ENCODE measurements at regions of chr20 and their contacts with region 1.

Region 1: DNA sequence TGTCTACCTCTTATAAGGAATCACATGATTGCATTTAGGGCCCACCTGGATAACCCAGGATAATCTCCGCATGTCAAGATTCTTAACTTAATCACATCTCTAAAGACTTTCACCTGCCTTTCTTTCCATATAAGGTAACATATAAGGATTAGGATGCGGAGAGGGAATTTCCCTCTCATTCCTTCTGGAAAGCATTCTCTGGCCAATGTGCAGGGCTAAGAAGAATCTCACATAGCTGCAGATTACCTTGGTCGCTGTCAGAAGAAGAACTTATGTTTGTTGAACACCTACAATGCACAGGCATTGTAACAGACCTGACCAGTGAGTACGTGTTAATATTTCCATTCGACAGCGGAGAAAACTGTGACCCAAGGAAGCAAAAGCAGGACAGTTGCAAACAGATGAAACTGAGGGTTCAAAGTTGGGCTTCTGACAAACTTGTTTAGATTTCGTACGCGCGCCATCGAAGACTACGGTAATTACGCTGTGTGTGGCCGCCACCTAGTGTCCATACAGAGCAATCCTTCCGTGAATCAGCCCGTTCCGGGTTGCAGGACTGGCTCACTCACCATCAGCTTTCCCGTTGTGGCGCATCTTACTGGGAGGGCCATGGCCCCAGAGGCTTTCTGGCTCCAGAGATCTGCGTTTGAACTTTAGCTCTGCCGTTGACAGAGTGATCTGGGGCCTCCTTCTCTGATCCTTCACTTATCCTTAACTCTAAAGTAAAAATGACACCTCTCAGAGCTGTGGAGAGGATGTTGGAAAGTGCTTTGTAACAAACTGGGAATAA is 9.5 kb downstream of the C20orf202 start:
- DNase-seq: peak; percentile 55 to 75 (median 65)
- ATAC-seq: peak in 3 of 4 donors; percentile 88 to 92 (median 91)
- H3K4me3 ChIP-seq: no peak overlapping the region
- H3K27ac ChIP-seq: no peak overlapping the region
- H3K4me1 ChIP-seq: peaks cover 0 to 7% (median 0%) of the 10 kb centered on the region in 12 donors
- H3K27me3 ChIP-seq: peaks cover 0 to 12% (median 0%) of the 10 kb centered on the region in 9 donors
- CTCF ChIP-seq: peak; percentile 67 to 87 (median 80)
- POLR2A ChIP-seq: no peak

Region 2: DNA sequence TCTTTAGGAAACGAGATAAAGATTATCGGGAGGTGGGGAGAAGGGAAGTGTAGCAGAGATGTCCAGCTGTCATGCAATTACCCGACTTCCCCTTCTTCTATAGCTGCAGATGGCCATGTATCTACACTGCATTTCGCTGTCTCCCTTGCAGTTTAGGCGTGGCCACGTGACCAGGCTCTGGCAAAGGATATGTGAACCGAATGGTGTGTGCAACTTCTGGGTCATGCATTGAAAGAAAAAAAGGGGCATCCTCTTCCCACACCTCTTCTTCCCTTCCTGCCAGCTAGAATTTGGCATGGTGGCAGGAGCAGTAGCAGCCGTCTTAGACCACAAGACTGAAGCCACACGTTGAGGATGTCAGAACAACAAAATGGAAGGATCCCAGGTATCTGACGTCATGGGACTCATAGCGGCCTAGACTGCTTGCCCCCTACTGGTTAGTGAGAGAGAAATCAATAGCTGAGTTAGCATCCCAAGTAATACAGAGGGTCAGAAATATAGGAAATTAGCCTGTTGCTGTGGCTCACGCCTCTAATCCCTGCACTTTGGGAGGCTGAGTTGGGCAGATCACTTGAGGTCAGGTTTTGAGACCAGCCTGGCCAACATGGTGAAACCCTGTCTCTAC is 635.5 kb before region 1 on chr20:
- intact Hi-C with region 1: no loop called
- DNase-seq: no peak
- ATAC-seq: no peak
- H3K4me3 ChIP-seq: no peak overlapping the region
- H3K27ac ChIP-seq: peak overlapping the region in 3 of 12 donors; percentile 19 to 89 (median 29)
- H3K4me1 ChIP-seq: peaks cover 0 to 53% (median 32%) of the 10 kb centered on the region in 12 donors
- H3K27me3 ChIP-seq: peaks cover 0 to 5% (median 0%) of the 10 kb centered on the region in 9 donors
- CTCF ChIP-seq: peak in 2 of 12 donors; percentile 9 to 20
- POLR2A ChIP-seq: no peak

Region 3: DNA sequence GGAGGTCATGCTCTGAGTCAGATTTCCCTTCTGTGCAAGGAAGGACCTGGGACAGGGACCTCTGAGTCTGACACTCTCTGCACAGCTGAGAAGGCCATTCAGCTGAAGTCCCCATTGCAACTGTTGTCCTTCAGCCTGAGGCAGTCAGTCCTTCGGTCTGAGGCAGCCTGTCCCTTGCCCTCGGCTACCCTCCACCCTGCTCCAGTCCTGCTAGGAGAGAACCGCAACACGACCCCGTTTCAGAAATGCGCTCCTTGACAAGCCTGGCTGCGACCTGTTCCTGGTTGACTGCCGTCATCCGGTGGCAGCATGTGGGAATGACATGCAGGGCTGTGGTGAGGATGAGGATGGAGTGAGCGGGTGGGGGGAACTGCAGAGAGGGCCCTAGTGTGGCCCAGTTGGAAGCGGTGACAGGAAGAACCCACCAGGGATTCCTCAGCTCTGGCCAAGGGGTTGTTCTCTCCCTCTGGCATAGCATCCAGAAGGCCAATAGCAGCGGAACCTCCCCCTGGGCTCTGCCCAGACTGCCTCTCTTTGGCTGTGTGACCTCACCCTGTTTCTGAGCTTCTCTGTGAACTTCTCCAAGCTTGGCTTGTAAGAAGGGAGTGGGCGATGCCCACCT is 256.4 kb before region 1 on chr20:
- intact Hi-C with region 1: loop called in 5 of 10 experiments (anchors 5 to 10 kb)
- DNase-seq: peak; percentile 52 to 83 (median 55)
- ATAC-seq: peak in 3 of 4 donors; percentile 83 to 87 (median 84)
- H3K4me3 ChIP-seq: no peak overlapping the region
- H3K27ac ChIP-seq: no peak overlapping the region
- H3K4me1 ChIP-seq: peaks cover 0 to 2% (median 0%) of the 10 kb centered on the region in 12 donors
- H3K27me3 ChIP-seq: peaks cover 4 to 68% (median 28%) of the 10 kb centered on the region in 9 donors
- CTCF ChIP-seq: peak; percentile 87 to 99 (median 96)
- POLR2A ChIP-seq: no peak

Region 4: DNA sequence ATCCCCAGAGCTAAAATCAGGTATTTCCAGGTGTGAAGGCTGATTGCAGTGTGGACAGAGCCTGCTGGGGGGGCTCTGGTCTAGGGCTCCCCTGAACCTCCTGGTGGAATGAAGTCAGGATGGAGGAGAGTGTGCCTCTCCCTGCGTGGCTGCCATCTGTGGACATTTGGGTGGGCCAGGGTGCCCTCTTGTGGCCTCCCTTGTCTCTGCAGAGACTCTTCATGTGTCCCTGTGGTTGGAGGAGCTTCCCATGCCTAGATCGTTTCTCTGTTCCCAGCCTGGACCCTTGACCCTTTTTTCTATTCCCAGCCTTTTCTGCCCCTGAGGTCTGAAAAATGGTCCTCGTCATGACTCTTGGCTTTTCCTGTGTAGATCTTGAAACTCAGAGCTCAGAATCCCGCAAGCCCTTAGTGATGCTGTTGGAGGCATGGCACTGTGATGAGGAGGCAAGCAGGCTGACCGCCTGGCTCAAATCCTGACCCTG is 104.3 kb before region 1 on chr20:
- intact Hi-C with region 1: loop called in 6 of 10 experiments (anchors 2 to 10 kb)
- DNase-seq: peak; percentile 27 to 70 (median 42)
- ATAC-seq: peak in 3 of 4 donors; percentile 75 to 80 (median 76)
- H3K4me3 ChIP-seq: no peak overlapping the region
- H3K27ac ChIP-seq: no peak overlapping the region
- H3K4me1 ChIP-seq: peaks cover 0 to 4% (median 0%) of the 10 kb centered on the region in 12 donors
- H3K27me3 ChIP-seq: no peaks in the 10 kb centered on the region
- CTCF ChIP-seq: peak; percentile 61 to 83 (median 73)
- POLR2A ChIP-seq: no peak

Region 5: DNA sequence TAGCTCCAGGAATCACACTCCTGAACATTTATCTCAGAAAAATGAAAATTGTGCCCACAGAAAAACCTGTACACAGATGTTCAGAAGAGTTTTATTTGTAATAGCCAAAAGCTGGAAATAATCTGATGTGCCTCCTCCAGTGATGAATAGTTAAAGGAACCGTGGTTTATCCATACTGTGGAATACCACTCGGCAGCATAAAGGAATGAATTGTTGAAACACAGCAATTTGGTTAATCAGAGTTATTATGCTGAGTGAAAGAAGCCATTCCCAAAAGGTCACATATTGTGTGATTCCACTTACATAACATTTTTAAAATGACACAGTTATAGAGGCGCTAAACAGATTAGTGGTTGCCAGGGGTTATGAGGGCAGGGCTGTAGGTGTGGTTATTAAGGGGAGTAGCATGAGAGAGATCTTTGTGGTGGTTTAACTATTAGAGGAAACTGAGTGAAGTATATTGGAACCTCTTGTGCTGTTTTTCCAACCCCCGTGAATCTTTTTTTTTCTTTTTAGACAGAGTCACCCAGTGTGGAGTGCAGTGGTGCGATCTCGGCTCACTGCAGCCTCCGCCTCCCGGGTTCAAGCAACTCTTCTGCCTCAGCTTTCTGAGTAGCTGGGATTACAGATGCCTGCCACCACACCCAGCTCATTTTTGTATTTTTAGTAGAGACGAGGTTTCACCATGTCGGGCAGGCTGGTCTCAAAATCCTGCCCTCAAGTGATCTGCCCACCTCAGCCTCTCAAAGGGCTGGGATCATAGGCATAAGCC is 68.2 kb before region 1 on chr20:
- intact Hi-C with region 1: loop called in 1 of 10 experiments (anchors 2 kb)
- DNase-seq: no peak
- ATAC-seq: peak in 3 of 4 donors; percentile 41 to 70 (median 42)
- H3K4me3 ChIP-seq: no peak overlapping the region
- H3K27ac ChIP-seq: no peak overlapping the region
- H3K4me1 ChIP-seq: peaks cover 0 to 17% (median 5%) of the 10 kb centered on the region in 12 donors
- H3K27me3 ChIP-seq: no peaks in the 10 kb centered on the region
- CTCF ChIP-seq: no peak
- POLR2A ChIP-seq: no peak

Region 6: DNA sequence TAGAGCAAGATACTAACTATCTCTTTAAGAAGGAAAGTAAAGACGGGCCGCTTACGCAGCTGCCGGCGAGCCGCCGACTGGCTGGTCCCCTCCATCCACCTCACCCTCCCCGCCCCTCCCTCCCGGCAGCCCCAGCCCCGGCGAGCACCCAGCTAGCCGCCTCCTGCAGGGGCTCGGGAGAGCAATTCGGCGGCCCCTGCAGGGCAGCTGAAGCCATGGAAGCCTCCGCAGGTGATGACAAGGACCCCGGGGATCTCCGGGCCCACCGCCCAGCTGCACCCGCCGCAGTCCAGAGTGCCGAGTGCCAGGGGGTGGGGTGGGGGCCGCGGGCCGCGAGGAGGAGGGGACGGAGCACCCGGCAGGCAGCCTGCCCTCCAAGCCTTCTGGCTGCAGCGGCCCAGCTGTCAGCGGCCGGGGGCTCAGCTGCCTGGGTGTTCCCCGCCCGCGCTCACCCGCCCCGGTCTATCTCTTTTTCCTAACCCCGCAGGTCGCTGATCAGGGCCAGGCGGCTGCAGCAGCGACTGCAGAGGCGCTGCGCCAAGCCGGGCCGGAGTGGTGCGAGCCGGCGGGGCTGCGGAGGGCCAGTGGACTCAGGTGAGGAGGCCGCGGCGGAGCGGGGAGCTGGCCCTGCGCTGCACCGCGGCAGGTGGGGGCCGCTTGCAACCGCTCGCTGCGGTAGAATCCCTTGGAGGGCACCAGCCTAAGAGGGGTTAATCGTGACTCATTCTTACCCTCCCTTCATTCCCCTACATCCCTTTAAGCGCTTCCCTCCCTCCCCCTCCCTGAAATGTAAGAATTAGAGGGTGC is 53.6 kb after region 1 on chr20 and contains the start of gene SNPH:
- intact Hi-C with region 1: no loop called
- DNase-seq: peak; percentile 75 to 85 (median 85)
- ATAC-seq: peak; percentile 81 to 94 (median 92)
- H3K4me3 ChIP-seq: peak within 1 kb of the TSS; percentile 70 to 95 (median 85)
- H3K27ac ChIP-seq: peak within 1 kb of the TSS in 11 of 12 donors; percentile 14 to 81 (median 61)
- H3K4me1 ChIP-seq: peaks cover 0 to 28% (median 18%) of the 10 kb centered on the region in 12 donors
- H3K27me3 ChIP-seq: peaks cover 0 to 10% (median 0%) of the 10 kb centered on the region in 9 donors
- CTCF ChIP-seq: no peak
- POLR2A ChIP-seq: peak in 1 of 2 donors; percentile 22
- total RNA-seq, gene SNPH: 6.5 to 17.4 (median 11.7) TPM

Region 7: DNA sequence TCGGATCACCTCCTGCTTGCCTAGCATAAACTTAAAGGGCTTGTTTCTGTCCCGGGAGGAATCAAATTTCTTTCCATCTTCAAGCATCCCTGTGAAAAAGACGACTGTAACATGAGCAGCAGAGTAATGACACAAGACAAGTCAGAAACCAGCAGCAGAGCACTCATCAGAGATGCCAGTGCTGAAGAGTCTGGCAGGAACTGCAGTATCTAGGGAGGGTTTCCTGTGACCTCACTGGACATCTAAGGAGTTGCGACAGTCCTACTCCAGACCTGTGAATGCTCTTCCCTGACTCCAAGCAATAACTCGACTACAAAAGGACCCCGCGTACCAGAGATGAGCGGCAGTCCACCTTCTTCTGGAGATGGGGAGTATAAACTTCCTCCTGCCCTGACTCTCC is 162.7 kb after region 1 on chr20:
- intact Hi-C with region 1: no loop called
- DNase-seq: no peak
- ATAC-seq: peak in 3 of 4 donors; percentile 46 to 64 (median 64)
- H3K4me3 ChIP-seq: peak overlapping the region in 1 of 12 donors; percentile 2
- H3K27ac ChIP-seq: peak overlapping the region in 11 of 12 donors; percentile 5 to 88 (median 62)
- H3K4me1 ChIP-seq: peaks cover 8 to 100% (median 86%) of the 10 kb centered on the region in 12 donors
- H3K27me3 ChIP-seq: no peaks in the 10 kb centered on the region
- CTCF ChIP-seq: no peak
- POLR2A ChIP-seq: no peak

Measured in heart left ventricle (tissue), 16 donors.